GM12878 (cell line): ENCODE measurements at regions of chr18 and their contacts with region 1.

Region 1: DNA sequence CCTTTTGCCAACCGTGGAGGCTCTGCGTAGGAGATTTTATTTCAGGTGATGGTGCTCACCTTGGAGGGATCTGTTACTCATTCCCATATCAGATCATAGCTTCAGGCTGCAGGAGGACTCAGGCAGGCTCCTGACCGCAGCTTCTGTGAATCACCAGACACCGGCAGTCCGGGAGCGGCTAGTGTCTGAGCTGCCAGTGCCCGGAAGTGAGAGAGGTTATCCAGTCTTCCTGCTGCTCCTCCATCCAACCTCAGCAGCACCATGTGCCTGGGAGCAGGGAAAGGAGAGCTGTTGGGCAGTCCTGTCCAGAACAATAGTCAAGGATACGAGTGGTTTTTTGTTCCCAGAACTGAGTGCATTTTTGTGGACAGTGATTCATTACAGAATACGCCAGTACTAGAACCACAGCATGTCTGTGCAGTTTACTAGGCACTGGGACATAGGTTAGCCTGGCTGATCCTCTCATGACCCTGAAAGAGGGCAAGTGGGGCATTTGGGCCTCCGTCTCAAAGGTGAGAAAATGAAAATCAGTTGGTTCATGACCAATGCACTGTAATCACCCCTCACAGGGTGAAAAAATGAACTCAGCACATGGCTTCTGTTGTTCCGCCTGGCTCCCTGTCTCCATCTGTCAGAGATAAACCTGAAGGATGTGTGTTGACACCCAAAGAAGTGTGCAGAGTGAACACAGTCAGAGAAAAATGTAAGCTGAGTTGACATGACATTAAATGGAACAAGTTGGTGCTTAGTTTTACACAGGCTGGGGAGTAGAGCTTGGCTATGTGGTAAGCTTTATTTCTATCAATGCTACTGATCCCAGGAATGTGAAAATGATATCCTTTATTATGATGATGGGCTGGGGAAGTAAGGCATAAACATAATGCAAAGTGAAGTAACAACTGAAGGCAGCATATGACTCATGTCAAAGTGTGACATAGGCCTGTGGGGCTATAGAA is 12.2 kb downstream of the FHOD3 start:
- DNase-seq: no peak
- ATAC-seq: peak; percentile 34
- H3K4me3 ChIP-seq: no peak overlapping the region
- H3K27ac ChIP-seq: no peak overlapping the region
- H3K4me1 ChIP-seq: no peaks in the 10 kb centered on the region
- H3K27me3 ChIP-seq: 0 out of 4 replicates have a peak, but pooled peaks cover 0 to under 1% of the 10 kb centered on the region in 2 experiments
- CTCF ChIP-seq: no peak
- EP300 ChIP-seq: no peak
- POLR2A ChIP-seq: no peak
- RAD21 ChIP-seq: no peak

Region 2: DNA sequence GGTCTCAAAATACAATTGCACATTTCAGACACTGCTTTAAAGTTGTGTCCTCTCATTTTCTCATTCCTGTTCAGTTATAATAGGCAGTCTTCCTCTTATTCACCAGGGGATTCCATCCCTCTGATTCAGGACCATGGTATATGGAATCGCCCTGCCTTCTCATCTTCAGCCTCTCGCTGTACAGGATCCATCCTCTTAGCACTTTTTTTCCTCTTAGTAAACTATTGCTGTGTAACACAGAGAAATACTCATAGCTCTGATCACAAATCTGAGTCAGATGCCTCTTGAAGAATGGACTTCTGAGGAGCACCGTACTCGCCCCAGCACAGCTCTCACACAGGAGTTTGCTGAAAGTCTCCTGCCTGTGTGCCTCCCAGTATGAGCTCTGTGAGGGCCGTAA is 325.9 kb before region 1 on chr18:
- CTCF ChIA-PET with region 1: no interaction called
- POLR2A ChIA-PET with region 1: no interaction called
- RAD21 ChIA-PET with region 1: no interaction called
- SMC1A ChIA-PET with region 1: no interaction called
- in situ Hi-C with region 1: no loop called
- intact Hi-C with region 1: no loop called
- DNase-seq: no peak
- ATAC-seq: no peak
- H3K4me3 ChIP-seq: no peak overlapping the region
- H3K27ac ChIP-seq: no peak overlapping the region
- H3K4me1 ChIP-seq: no peaks in the 10 kb centered on the region
- H3K27me3 ChIP-seq: no peaks in the 10 kb centered on the region
- CTCF ChIP-seq: no peak
- EP300 ChIP-seq: no peak
- POLR2A ChIP-seq: no peak
- RAD21 ChIP-seq: no peak

Region 3: GRCh38 chr18:36352384-36352783 is 42.7 kb after region 1 on chr18:
- CTCF ChIA-PET with region 1: interaction called, 3 read pairs
- POLR2A ChIA-PET with region 1: interaction called, 3 read pairs
- RAD21 ChIA-PET with region 1: interaction called, 48 read pairs
- SMC1A ChIA-PET with region 1: interaction called, 19 read pairs
- in situ Hi-C with region 1: no loop called
- intact Hi-C with region 1: no loop called
- DNase-seq: no peak
- ATAC-seq: no peak
- H3K4me3 ChIP-seq: no peak overlapping the region
- H3K27ac ChIP-seq: no peak overlapping the region
- H3K4me1 ChIP-seq: peaks cover 5% of the 10 kb centered on the region; the same call in 1 of the 2 replicates
- H3K27me3 ChIP-seq: no peaks in the 10 kb centered on the region
- CTCF ChIP-seq: no peak
- EP300 ChIP-seq: no peak
- POLR2A ChIP-seq: no peak
- RAD21 ChIP-seq: no peak